ENCODE measurements at regions of chr3 and their contacts with region 1.

Region 1: DNA sequence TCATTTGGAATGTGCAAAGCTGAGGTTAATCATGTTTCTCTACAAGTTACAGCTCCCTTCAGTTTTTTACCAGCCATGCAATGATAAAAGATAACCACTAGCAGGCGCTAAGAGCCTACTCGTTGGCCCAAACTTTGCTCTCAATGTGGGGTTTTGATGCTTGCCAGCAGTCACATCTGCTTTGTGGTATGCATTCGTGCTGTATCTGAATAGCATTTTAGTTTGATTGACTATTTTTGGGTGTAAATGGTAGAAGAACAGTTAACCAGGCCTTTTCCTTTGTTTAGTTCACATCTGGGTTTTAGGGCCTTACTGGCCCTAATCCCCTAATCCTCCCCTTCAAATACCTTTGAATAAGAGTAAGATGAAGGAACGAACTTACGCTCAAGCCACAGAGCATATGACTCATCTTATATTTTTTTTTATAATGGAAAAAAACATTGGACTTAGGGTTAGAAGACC is 4.4 kb upstream of the CLDN11 start:
- DNase-seq: peak; percentile 49 to 63
- ATAC-seq: peak; percentile 62 to 84; a peak in 5 of 6 replicates
- H3K4me3 ChIP-seq: no peak overlapping the region
- H3K27ac ChIP-seq: no peak overlapping the region
- H3K4me1 ChIP-seq: no peaks in the 10 kb centered on the region
- CTCF ChIP-seq: peak; percentile 96
- EP300 ChIP-seq: no peak
- POLR2A ChIP-seq: no peak
- RAD21 ChIP-seq: peak; percentile 97 to 98

Region 2: DNA sequence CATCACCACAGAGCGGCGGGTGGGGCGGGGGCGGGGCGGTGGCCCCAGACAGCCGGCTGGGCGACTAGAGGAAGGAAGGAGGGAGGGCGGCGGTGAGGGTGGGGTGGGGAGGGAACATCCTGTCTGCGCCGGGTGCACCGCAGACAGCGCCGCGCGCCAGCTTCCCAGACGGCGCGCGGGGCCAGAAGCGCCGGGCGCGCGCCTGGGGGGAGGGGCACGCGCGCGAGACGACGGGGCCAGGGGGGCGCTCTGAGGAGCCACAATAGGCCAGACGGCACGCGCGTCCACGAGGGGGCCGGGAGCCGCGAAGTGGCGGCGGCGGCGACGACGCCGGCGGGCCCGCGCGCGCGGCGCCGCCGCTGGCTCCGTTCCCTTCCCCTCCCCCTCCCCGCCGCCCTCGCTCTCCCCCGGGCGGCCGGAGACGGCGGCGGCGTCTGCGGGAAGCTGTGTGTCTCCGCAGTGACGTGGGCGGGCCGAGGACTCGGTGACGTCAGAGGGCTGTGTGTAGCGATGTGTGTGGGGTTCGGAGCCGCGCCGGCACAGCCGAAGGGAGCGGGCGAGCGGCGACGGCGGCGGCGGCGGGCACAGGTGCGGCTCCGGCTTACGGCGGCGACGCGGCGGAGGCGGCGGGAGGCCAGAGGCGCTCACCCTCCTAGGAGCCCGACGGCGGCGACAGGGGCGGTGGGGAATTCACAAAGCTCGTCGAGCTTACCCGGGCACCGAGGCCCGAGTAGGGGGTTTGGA is 56.9 kb before region 1 on chr3 and contains the start of gene SKIL:
- CTCF ChIA-PET with region 1: interaction called, 9 read pairs
- POLR2A ChIA-PET with region 1: interaction called, 11 read pairs
- DNase-seq: peak; percentile 80 to 97
- ATAC-seq: peak; percentile 69 to 76
- H3K4me3 ChIP-seq: peak within 1 kb of the TSS; percentile 75
- H3K27ac ChIP-seq: peak within 1 kb of the TSS; percentile 99
- H3K4me1 ChIP-seq: peaks cover 48% of the 10 kb centered on the region
- CTCF ChIP-seq: peak; percentile 31; the same call in 1 of the 3 replicates
- EP300 ChIP-seq: peak; percentile 60 to 68; a peak in 4 of 5 replicates
- POLR2A ChIP-seq: peak; percentile 74
- RAD21 ChIP-seq: peak in 1 of 2 experiments; percentile 2; a peak in 1 of 5 replicates
- polyA plus RNA-seq, gene SKIL: 53.7 and 64.2 TPM in 2 replicates

Region 3: GRCh38 chr3:170425491-170426239 is 11.4 kb after region 1 on chr3:
- CTCF ChIA-PET with region 1: interaction called, 12 read pairs
- POLR2A ChIA-PET with region 1: no interaction called
- DNase-seq: no peak
- ATAC-seq: no peak
- H3K4me3 ChIP-seq: no peak overlapping the region
- H3K27ac ChIP-seq: no peak overlapping the region
- H3K4me1 ChIP-seq: no peaks in the 10 kb centered on the region
- CTCF ChIP-seq: no peak
- EP300 ChIP-seq: no peak
- POLR2A ChIP-seq: no peak
- RAD21 ChIP-seq: no peak

Region 4: DNA sequence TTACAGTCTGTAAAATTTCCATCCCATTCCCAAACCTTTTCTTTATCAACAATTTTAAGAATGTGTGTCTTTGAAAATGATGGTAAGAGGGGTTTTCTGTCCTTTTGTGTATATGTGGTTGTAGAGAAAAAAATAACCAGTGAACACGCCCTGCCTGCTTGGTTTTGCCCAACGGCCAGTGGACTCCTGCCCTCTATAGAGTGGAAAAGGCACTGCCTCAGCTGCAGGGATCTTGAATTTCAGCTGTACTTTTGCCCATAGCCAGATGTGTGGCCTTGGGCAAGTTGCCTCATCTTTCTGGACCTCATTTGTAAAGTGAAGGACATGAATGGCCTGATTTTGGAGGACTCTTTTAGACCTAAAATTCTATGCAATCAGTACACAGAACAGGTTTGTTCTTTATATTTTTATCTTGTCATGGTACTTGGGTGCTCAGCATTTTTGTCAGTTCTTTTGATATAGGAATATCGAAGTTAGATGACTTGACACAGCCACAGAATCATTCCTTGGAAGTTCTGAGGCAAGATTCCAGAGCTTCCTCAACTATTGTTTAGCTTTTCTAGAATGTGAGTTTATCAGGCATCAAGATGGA is 85.4 kb after region 1 on chr3:
- CTCF ChIA-PET with region 1: interaction called, 18 read pairs
- POLR2A ChIA-PET with region 1: no interaction called
- DNase-seq: peak; percentile 48 to 61
- ATAC-seq: peak; percentile 88 to 95
- H3K4me3 ChIP-seq: no peak overlapping the region
- H3K27ac ChIP-seq: no peak overlapping the region
- H3K4me1 ChIP-seq: no peaks in the 10 kb centered on the region
- CTCF ChIP-seq: peak; percentile 45
- EP300 ChIP-seq: no peak
- POLR2A ChIP-seq: no peak
- RAD21 ChIP-seq: peak; percentile 63 to 70

Region 5: DNA sequence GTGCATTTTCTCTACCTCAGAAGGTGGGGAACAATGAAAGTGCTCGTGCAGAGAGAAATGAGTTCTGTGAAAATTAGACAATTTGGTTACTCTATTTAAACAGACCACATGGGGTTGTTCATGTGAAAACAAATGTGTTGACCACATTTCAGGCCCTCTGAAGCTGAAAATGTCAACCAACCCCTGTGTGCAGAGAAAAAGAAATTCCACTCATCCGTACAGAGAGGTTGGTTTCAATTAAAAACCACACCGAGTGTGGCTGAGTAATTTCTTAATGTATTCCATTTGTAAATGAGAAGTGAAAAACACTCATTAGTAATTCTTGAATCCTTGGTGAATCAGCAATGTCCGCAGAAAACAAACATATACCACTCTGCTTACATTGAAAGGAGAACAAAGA is 218.5 kb after region 1 on chr3:
- CTCF ChIA-PET with region 1: no interaction called
- POLR2A ChIA-PET with region 1: no interaction called
- DNase-seq: no peak
- ATAC-seq: no peak
- H3K4me3 ChIP-seq: no peak overlapping the region
- H3K27ac ChIP-seq: no peak overlapping the region
- H3K4me1 ChIP-seq: no peaks in the 10 kb centered on the region
- CTCF ChIP-seq: no peak
- EP300 ChIP-seq: no peak
- POLR2A ChIP-seq: no peak
- RAD21 ChIP-seq: no peak

Region 6: DNA sequence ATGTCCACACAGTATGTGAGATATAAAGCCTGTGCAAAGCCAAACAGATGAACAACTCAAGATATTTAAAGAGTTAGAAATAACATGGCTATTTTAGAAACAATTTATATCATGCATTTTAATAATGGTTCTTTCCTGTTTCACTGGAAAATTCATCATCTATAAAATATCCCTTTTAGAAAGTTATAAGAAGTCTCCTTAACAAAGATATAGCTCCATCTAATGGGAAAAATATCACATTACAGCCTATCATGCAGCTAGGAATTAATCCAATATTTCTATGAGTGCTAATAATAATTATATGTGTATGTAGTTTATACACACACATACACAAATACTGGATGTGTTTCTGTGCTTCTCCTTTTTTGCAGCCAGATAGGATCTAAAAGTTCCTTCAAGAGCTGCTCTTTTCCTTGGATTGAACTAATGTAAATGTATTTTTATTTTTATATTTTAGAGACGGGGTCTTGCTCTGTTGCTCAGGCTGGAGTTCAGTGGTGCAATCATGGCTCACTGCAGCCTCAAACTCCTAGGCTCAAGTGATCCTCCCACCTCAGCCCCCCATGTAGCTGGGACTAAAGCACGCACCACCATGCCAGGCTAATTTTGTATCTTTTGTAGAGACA is 434.2 kb after region 1 on chr3:
- CTCF ChIA-PET with region 1: interaction called, 16 read pairs
- POLR2A ChIA-PET with region 1: no interaction called
- DNase-seq: no peak
- ATAC-seq: peak in 1 of 2 experiments; percentile 50; a peak in 2 of 6 replicates
- H3K4me3 ChIP-seq: no peak overlapping the region
- H3K27ac ChIP-seq: no peak overlapping the region
- H3K4me1 ChIP-seq: no peaks in the 10 kb centered on the region
- CTCF ChIP-seq: peak; percentile 42
- EP300 ChIP-seq: no peak
- POLR2A ChIP-seq: no peak
- RAD21 ChIP-seq: peak; percentile 46 to 55; a peak in 4 of 5 replicates

Measured in A549 (cell line).